MCF 10A (cell line): ENCODE measurements at regions of chr4 and their contacts with region 1.

Region 1: GRCh38 chr4:119559044-119559647 is 69.5 kb downstream of the PDE5A start:
- DNase-seq: peak; percentile 56
- H3K4me3 Mint-ChIP-seq: no peak overlapping the region
- H3K27ac Mint-ChIP-seq: no peak overlapping the region
- H3K4me1 Mint-ChIP-seq: no peaks in the 10 kb centered on the region
- H3K27me3 Mint-ChIP-seq: no peaks in the 10 kb centered on the region
- CTCF ChIP-seq: peak; percentile 43

Region 2: GRCh38 chr4:119785963-119786362 is 226.8 kb after region 1 on chr4:
- CTCF ChIA-PET with region 1: interaction called, 11 read pairs
- POLR2A ChIA-PET with region 1: no interaction called
- intact Hi-C with region 1: loop called (anchors 5 kb)
- DNase-seq: peak; percentile 41
- H3K4me3 Mint-ChIP-seq: no peak overlapping the region
- H3K27ac Mint-ChIP-seq: no peak overlapping the region
- H3K4me1 Mint-ChIP-seq: no peaks in the 10 kb centered on the region
- H3K27me3 Mint-ChIP-seq: no peaks in the 10 kb centered on the region
- CTCF ChIP-seq: peak; percentile 44

Region 3: DNA sequence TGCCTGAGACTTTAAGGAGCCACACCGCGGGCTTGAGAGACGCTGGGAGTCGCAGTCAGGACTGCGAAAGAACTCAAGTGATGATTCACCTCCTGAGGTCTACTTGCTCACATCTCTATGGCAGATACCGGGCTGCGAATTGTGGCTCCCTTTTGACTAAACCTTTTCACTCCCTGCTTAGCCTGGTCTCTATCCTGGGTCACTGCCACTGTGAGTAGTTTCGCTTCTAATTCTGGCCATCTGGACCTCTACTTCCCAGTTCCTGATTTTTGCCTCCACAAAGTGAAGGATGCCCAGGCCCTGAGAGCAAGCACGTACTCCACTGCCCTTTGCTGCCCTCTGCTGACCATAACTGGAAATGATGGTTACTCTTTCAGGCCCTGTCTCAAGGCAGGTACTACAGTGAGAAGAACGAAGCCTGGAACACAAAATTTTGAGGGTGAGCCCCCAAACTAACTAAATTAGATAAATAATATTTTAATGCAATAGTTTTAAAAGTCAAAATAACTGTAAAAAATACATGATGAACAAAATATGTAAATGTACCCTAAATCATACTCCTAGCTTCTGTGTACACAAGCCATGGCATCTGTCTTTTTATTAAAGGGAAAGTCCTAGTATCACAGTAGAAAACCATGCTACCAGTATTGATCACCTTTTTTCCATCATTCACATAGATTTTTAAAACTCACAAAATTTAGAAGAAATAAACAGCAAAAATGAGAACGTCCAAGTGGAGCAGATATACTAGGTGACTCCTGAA is 490.8 kb after region 1 on chr4:
- CTCF ChIA-PET with region 1: interaction called, 62 read pairs
- POLR2A ChIA-PET with region 1: interaction called, 3 read pairs
- intact Hi-C with region 1: loop called (anchors 1 kb)
- DNase-seq: peak; percentile 84
- H3K4me3 Mint-ChIP-seq: no peak overlapping the region
- H3K27ac Mint-ChIP-seq: no peak overlapping the region
- H3K4me1 Mint-ChIP-seq: peaks cover 13% of the 10 kb centered on the region
- H3K27me3 Mint-ChIP-seq: no peaks in the 10 kb centered on the region
- CTCF ChIP-seq: peak; percentile 73

Region 4: DNA sequence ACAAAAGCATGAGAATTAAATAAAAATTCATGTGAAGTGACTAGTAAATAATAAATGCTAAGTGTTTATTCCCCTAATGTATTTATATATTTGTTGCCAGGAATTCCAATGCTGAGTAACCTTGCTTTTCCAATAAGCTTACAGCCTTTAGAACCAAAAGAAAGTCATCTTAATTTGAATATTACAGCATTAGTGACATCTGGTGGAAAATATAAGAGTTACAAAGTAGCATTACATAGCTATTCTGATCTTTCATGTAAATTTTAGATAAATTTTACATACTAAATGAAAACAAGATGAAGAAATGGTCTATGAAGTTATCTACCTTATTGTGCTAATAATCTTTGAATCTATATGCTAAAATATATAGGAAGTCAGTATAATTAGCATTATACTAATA is 497.1 kb after region 1 on chr4:
- CTCF ChIA-PET with region 1: interaction called, 62 read pairs
- POLR2A ChIA-PET with region 1: interaction called, 4 read pairs
- intact Hi-C with region 1: no loop called
- DNase-seq: no peak
- H3K4me3 Mint-ChIP-seq: no peak overlapping the region
- H3K27ac Mint-ChIP-seq: no peak overlapping the region
- H3K4me1 Mint-ChIP-seq: peaks cover 8% of the 10 kb centered on the region
- H3K27me3 Mint-ChIP-seq: no peaks in the 10 kb centered on the region
- CTCF ChIP-seq: peak; percentile 7